ENCODE measurements at regions of chr22 and their contacts with region 1.

Region 1: GRCh38 chr22:49014227-49015201 is 813.2 kb downstream of the BRD1 start:
- DNase-seq: no peak
- H3K4me3 ChIP-seq: no peak overlapping the region
- CTCF ChIP-seq: no peak

Region 2: GRCh38 chr22:49070461-49070860 is 55.9 kb after region 1 on chr22:
- in situ Hi-C with region 1: loop called (anchors 5 kb)
- DNase-seq: no peak
- H3K4me3 ChIP-seq: no peak overlapping the region
- CTCF ChIP-seq: no peak

Measured in astrocyte of the cerebellum (primary cell).